IMR-90 (cell line): ENCODE measurements at regions of chr10 and their contacts with region 1.

Region 1: GRCh38 chr10:6737758-6738505 is 157.9 kb upstream of the PRKCQ start:
- DNase-seq: peak; percentile 77
- ATAC-seq: peak; percentile 76
- H3K4me3 ChIP-seq: no peak overlapping the region; the same call in 1 of the 2 replicates
- H3K27ac ChIP-seq: peak overlapping the region; percentile 80
- H3K4me1 ChIP-seq: peaks cover 28% of the 10 kb centered on the region
- H3K27me3 ChIP-seq: no peaks in the 10 kb centered on the region
- CTCF ChIP-seq: no peak
- POLR2A ChIP-seq: no peak
- RAD21 ChIP-seq: no peak

Region 2: GRCh38 chr10:6239213-6239991 is 498.5 kb before region 1 on chr10:
- CTCF ChIA-PET with region 1: no interaction called
- POLR2A ChIA-PET with region 1: no interaction called
- dilution Hi-C with region 1: no loop called
- in situ Hi-C with region 1: loop called (anchors 25 kb)
- intact Hi-C with region 1: no loop called
- DNase-seq: peak; percentile 99
- ATAC-seq: peak; percentile 86
- H3K4me3 ChIP-seq: no peak overlapping the region
- H3K27ac ChIP-seq: peak overlapping the region; percentile 50
- H3K4me1 ChIP-seq: peaks cover 13% of the 10 kb centered on the region
- H3K27me3 ChIP-seq: no peaks in the 10 kb centered on the region
- CTCF ChIP-seq: no peak
- POLR2A ChIP-seq: no peak
- RAD21 ChIP-seq: peak; percentile 26

Region 3: DNA sequence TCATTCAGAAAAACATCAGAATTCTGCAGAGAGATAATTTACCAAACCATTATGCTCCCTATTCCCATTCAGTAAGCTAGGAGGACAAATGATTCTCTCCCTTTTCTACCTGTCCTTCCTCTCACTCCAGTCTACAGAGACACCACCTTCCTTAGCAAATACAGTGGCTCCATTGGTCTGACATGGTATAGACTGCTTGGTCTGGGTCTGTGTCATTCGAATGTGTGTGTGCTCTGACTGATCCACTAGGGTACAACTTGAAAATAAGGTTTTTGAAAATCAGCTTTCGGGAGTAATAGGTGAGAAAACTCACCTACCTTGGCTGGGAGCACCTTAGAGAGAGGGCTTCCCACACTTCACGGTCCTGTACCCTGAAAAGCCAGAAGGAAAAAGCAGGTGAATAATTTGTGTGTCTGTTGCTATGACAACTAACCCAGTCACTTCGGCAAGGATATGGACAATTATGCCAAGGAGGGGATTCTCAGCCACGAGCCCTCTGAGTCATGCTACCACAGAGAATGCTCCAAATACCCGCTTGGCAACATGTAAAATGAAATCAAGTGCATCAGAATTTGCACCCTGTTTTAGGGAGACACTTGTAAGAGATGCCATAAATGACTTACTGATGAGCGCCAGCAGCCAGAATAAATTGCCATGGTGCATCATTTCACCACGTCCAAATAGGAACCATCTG is 43.3 kb before region 1 on chr10:
- CTCF ChIA-PET with region 1: no interaction called
- POLR2A ChIA-PET with region 1: no interaction called
- dilution Hi-C with region 1: no loop called
- in situ Hi-C with region 1: no loop called
- intact Hi-C with region 1: no loop called
- DNase-seq: no peak
- ATAC-seq: no peak
- H3K4me3 ChIP-seq: no peak overlapping the region
- H3K27ac ChIP-seq: no peak overlapping the region
- H3K4me1 ChIP-seq: peaks cover 8% of the 10 kb centered on the region
- H3K27me3 ChIP-seq: no peaks in the 10 kb centered on the region
- CTCF ChIP-seq: no peak
- POLR2A ChIP-seq: no peak
- RAD21 ChIP-seq: no peak

Region 4: GRCh38 chr10:7787857-7788638 is 1050.1 kb after region 1 on chr10 and contains the starts of genes ATP5F1C and KIN:
- CTCF ChIA-PET with region 1: no interaction called
- POLR2A ChIA-PET with region 1: no interaction called
- dilution Hi-C with region 1: no loop called
- in situ Hi-C with region 1: loop called (anchors 25 kb)
- intact Hi-C with region 1: no loop called
- DNase-seq: peak; percentile 95
- ATAC-seq: peak; percentile 96
- H3K4me3 ChIP-seq: peak within 1 kb of the TSS; percentile 84
- H3K27ac ChIP-seq: peak within 1 kb of the TSS; percentile 92
- H3K4me1 ChIP-seq: peaks cover 1% of the 10 kb centered on the region; the same call in 1 of the 2 replicates
- H3K27me3 ChIP-seq: no peaks in the 10 kb centered on the region
- CTCF ChIP-seq: no peak
- POLR2A ChIP-seq: peak; percentile 73
- RAD21 ChIP-seq: no peak
- total RNA-seq, gene ATP5F1C: 343 and 367 TPM in 2 replicates
- total RNA-seq, gene KIN: 3.0 and 6.1 TPM in 2 replicates